Posterior cingulate gyrus (tissue), 11 donors: ENCODE measurements at regions of chr7 and their contacts with region 1.

Region 1: GRCh38 chr7:18345641-18346234 is 149.8 kb upstream of the HDAC9 start:
- DNase-seq: peak in 6 of 10 donors; percentile 16 to 55 (median 41)

Region 2: GRCh38 chr7:17680943-17681351 is 664.8 kb before region 1 on chr7:
- intact Hi-C with region 1: loop called (anchors 10 kb)
- DNase-seq: no peak

Region 3: GRCh38 chr7:17769918-17770317 is 575.8 kb before region 1 on chr7:
- intact Hi-C with region 1: loop called (anchors 10 kb)
- DNase-seq: peak in 6 of 10 donors; percentile 31 to 83 (median 52)

Region 4: GRCh38 chr7:17971411-17971810 is 374.3 kb before region 1 on chr7:
- intact Hi-C with region 1: loop called (anchors 2 kb)
- DNase-seq: no peak

Region 5: GRCh38 chr7:18019573-18019972 is 326.2 kb before region 1 on chr7:
- intact Hi-C with region 1: no loop called
- DNase-seq: no peak